HEK293T (cell line): ENCODE measurements at regions of chr17 and their contacts with region 1.

Region 1: DNA sequence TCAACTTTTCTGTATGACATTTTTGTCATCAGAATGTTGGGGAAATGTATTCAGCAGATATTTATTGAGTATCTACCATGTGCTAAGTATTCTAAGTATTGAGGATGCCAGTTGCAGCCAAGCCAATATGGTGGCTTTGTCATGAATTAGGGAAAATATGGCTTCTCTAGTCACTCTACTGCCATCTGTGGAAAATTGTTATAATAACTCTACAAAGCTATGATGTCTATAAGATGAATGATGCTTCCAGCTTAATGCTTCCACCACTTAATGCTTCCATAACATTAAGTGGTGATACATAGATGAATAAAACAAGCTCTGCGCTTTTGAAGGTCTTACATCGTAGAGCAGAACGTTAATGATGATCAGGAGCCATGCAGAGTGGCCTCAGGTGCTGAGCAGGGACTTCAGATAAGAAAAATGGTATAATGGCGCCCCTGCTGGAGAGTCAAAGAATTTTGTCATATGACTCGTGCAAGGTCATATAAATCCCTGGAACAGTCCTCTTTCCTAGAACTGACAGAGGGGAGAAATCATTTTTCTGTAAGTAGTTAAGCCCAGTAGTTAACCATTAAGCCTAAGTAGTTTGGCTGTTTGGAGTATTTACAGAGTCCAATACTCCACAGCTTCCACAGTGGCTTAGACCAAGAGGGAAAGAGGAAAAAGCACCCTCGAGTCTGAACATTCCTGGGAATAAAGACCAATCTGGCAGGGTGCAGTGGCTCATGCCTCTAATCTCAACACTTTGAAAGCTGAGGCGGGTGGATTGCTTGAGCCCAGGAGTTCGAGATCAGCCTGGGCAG is 2.7 kb upstream of the TMIGD1 start:
- DNase-seq: peak; percentile 49

Region 2: GRCh38 chr17:30477083-30477773 is 140.7 kb after region 1 on chr17 and contains the start of gene GOSR1:
- CTCF ChIA-PET with region 1: interaction called, 12 read pairs
- POLR2A ChIA-PET with region 1: interaction called, 4 read pairs
- DNase-seq: peak; percentile 83